CD4-positive, alpha-beta memory T cell (primary cell): ENCODE measurements at regions of chr12 and their contacts with region 1.

Region 1: DNA sequence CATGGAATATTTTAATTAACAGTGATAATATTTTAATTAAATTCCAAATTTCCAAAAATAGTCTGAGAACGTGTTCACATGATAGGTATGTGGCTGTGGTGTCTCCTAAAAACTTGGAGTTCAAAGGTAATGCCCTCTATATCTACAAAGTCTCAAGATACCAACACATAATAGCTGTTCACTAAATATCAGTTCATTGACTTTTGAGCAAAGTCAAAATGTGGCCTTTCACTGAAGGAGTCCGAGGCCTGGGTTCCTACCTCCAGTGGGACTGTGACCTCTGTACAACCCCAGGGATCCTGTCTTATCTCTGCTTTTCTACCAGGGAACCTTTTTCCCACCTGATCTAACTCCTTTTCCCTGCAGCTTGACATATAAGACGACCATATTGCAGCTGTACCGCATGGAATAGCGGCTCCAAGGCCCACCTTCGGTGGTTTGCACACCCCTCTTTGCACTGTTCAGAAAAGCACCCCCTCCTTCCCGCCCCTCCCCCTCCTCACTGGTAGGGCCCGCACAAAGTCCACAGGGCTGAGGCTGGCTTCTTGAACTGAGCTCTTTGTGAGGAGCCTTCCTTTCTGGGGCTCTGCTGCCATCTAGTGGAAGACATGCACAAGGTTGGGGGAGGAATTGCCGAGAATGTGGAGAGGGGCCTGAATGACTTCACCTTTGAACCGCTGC is 3.1 kb downstream of the CCND2 start:
- DNase-seq: peak; percentile 85 to 92 (median 88)
- H3K4me3 ChIP-seq: peak overlapping the region; percentile 84 to 96
- H3K4me3 Mint-ChIP-seq: peak overlapping the region; percentile 91 to 99 (median 96)
- H3K27ac ChIP-seq: peak overlapping the region; percentile 91
- H3K27ac Mint-ChIP-seq: peak overlapping the region; percentile 91 to 100 (median 98)
- H3K4me1 ChIP-seq: peaks cover 68% of the 10 kb centered on the region
- H3K4me1 Mint-ChIP-seq: peaks cover 34 to 88% (median 59%) of the 10 kb centered on the region in 4 donors
- H3K27me3 ChIP-seq: no peaks in the 10 kb centered on the region
- H3K27me3 Mint-ChIP-seq: no peaks in the 10 kb centered on the region

Region 2: DNA sequence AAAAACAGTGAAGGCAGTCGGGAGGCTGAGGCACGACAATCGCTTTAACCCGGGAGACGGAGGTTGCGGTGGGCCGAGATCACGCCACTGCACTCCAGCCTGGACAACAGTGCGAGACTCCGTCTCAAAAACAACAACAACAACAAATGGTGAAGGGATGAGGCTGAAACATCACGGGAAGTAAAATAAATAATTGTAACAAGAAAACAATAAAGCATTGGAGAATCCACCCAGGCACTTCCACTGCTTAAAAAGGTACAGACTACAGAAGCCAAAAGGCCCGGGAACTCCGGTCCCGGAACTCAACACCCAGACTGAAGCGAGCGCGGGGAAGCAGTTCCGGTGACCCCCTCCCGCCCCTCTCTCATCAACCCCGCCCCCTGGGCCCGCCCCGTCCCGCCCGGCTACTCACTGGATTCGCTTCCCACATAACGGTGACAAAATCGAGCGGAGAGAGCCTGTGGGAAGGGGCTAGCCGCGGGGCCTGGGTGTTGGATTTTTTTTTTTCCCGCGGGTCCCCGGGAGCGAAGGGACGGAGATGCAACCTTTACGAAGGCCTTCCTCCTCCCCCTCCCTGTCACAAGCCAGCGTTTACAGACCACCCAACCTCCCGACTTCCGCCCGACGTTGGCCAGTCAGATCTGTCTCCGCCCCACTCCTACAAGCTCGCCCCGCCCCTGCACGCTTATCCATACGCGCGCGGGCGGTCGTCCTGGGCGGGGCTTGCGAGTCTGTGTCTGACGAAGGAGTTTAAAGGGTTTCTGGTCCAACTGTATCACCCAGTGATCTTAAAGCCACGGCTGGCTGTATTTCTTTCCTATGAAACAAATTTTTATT is 403.6 kb before region 1 on chr12 and contains the start of gene PARP11:
- CTCF ChIA-PET with region 1: interaction called, 11 read pairs
- POLR2A ChIA-PET with region 1: interaction called, 12 read pairs
- intact Hi-C with region 1: no loop called
- DNase-seq: peak; percentile 97 to 98 (median 97)
- H3K4me3 ChIP-seq: peak within 1 kb of the TSS; percentile 53 to 87
- H3K4me3 Mint-ChIP-seq: peak within 1 kb of the TSS; percentile 95 to 99 (median 98)
- H3K27ac ChIP-seq: peak within 1 kb of the TSS; percentile 95
- H3K27ac Mint-ChIP-seq: peak within 1 kb of the TSS; percentile 95 to 100 (median 99)
- H3K4me1 ChIP-seq: peaks cover 50% of the 10 kb centered on the region
- H3K4me1 Mint-ChIP-seq: peaks cover 34 to 57% (median 40%) of the 10 kb centered on the region in 4 donors
- H3K27me3 ChIP-seq: no peaks in the 10 kb centered on the region
- H3K27me3 Mint-ChIP-seq: no peaks in the 10 kb centered on the region
- total RNA-seq, gene PARP11: 36.4 to 39.9 TPM

Region 3: DNA sequence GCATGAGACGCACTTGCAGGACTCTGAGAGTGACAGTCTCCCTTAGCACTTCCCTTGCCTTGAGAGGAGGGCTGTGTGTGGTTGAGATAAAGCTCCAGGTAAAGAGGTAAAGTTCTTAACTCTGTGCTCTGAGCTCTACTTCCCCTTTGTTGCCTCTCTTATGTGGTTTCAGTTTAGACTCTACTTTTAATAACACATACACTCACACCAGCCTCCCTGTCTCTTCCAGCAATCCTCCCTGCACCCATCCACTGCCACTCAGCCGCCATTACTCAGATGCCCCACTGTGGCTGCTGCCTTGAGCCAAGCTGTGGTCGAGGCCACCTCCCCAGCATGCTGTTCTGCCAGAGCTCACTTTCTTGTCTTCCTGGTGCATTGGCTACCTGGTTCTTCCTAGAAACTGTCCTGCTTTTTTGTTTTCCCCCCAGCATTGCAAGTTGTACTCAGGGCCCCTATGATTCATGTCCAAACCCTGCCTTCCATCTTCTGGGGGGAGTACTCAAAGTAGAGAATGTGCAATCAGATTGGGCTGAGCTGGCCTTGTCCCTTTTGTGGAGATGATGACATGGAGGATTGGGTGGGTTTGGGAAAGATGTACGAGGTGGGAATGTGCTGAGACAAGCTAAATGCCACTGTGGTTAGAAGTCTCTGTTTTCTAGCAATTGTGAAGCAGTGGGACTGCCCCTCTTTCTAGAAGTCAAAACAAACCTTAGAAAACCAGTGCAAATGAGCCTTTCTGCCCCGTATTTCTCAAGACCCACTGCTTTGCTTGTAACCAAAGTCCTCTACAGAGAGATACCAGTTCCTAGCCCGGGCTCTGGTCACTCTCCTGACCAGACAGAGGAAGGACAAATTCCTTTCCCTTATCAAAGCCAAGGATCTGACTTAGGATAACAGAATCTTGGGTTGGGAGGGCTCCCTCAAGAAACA is 287.9 kb before region 1 on chr12:
- CTCF ChIA-PET with region 1: interaction called, 217 read pairs
- POLR2A ChIA-PET with region 1: interaction called, 62 read pairs
- intact Hi-C with region 1: no loop called
- DNase-seq: peak in 4 of 5 donors; percentile 40 to 50 (median 43)
- H3K4me3 ChIP-seq: peak overlapping the region in 1 of 2 donors; percentile 2
- H3K4me3 Mint-ChIP-seq: peak overlapping the region in 7 of 8 donors; percentile 45 to 88 (median 66)
- H3K27ac ChIP-seq: peak overlapping the region; percentile 6
- H3K27ac Mint-ChIP-seq: peak overlapping the region; percentile 56 to 94 (median 90)
- H3K4me1 ChIP-seq: peaks cover 24% of the 10 kb centered on the region
- H3K4me1 Mint-ChIP-seq: peaks cover 18 to 33% (median 25%) of the 10 kb centered on the region in 4 donors
- H3K27me3 ChIP-seq: no peaks in the 10 kb centered on the region
- H3K27me3 Mint-ChIP-seq: peaks cover 0 to 2% of the 10 kb centered on the region in 2 donors

Region 4: GRCh38 chr12:4107436-4107878 is 169.2 kb before region 1 on chr12:
- CTCF ChIA-PET with region 1: interaction called, 128 read pairs
- POLR2A ChIA-PET with region 1: interaction called, 51 read pairs
- intact Hi-C with region 1: loop called (anchors 1 kb)
- DNase-seq: peak; percentile 78 to 87 (median 83)
- H3K4me3 ChIP-seq: no peak overlapping the region
- H3K4me3 Mint-ChIP-seq: peak overlapping the region in 7 of 8 donors; percentile 26 to 67 (median 47)
- H3K27ac ChIP-seq: no peak overlapping the region
- H3K27ac Mint-ChIP-seq: peak overlapping the region in 6 of 7 donors; percentile 80 to 94 (median 92)
- H3K4me1 ChIP-seq: peaks cover 10% of the 10 kb centered on the region
- H3K4me1 Mint-ChIP-seq: peaks cover 8 to 15% (median 11%) of the 10 kb centered on the region in 4 donors
- H3K27me3 ChIP-seq: no peaks in the 10 kb centered on the region
- H3K27me3 Mint-ChIP-seq: peaks cover 0 to 2% of the 10 kb centered on the region in 2 donors

Region 5: DNA sequence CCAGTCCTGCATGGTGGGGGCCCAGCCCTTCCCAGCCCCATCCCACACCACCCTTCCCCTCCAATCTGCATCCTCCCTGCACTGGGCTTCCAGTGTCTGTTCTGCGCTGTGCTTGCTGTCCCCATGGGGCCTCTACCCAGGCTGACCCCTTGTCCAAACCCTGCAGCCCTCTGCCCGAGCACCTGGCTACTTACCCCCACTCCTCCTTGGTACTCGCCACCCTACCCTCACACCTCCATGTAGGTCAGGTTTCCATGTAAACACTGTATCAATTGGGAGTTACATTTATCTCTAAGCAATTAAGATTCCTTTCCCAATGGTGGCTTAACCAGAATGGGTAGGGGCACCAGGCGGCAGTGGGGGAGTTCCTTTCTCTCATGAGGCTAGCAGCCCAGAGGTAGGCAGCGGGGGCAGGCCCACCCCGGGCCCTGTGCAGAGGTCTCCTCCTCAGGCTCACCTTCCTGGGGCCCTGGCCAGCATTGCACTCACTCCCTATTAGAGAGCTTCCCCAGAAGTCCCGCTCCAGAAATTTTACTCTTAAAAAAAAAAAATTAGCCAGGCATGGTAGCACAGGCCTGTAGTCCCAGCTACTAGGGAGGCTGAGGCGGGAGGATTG is 79.8 kb before region 1 on chr12:
- CTCF ChIA-PET with region 1: interaction called, 10 read pairs
- POLR2A ChIA-PET with region 1: no interaction called
- intact Hi-C with region 1: no loop called
- DNase-seq: no peak
- H3K4me3 ChIP-seq: no peak overlapping the region
- H3K4me3 Mint-ChIP-seq: no peak overlapping the region
- H3K27ac ChIP-seq: no peak overlapping the region
- H3K27ac Mint-ChIP-seq: no peak overlapping the region
- H3K4me1 ChIP-seq: no peaks in the 10 kb centered on the region
- H3K4me1 Mint-ChIP-seq: no peaks in the 10 kb centered on the region
- H3K27me3 ChIP-seq: no peaks in the 10 kb centered on the region
- H3K27me3 Mint-ChIP-seq: no peaks in the 10 kb centered on the region

Region 6: GRCh38 chr12:4293299-4293965 is 16.8 kb after region 1 on chr12:
- CTCF ChIA-PET with region 1: interaction called, 76 read pairs
- POLR2A ChIA-PET with region 1: interaction called, 26 read pairs
- intact Hi-C with region 1: no loop called
- DNase-seq: peak in 3 of 5 donors; percentile 18 to 20 (median 18)
- H3K4me3 ChIP-seq: peak overlapping the region in 1 of 2 donors; percentile 12
- H3K4me3 Mint-ChIP-seq: peak overlapping the region in 7 of 8 donors; percentile 43 to 84 (median 80)
- H3K27ac ChIP-seq: peak overlapping the region; percentile 56
- H3K27ac Mint-ChIP-seq: peak overlapping the region; percentile 89 to 99 (median 96)
- H3K4me1 ChIP-seq: peaks cover 56% of the 10 kb centered on the region
- H3K4me1 Mint-ChIP-seq: peaks cover 47 to 81% (median 70%) of the 10 kb centered on the region in 4 donors
- H3K27me3 ChIP-seq: no peaks in the 10 kb centered on the region
- H3K27me3 Mint-ChIP-seq: no peaks in the 10 kb centered on the region

Region 7: GRCh38 chr12:4392223-4392742 is 115.6 kb after region 1 on chr12:
- CTCF ChIA-PET with region 1: no interaction called
- POLR2A ChIA-PET with region 1: no interaction called
- intact Hi-C with region 1: no loop called
- DNase-seq: no peak
- H3K4me3 ChIP-seq: no peak overlapping the region
- H3K4me3 Mint-ChIP-seq: no peak overlapping the region
- H3K27ac ChIP-seq: no peak overlapping the region
- H3K27ac Mint-ChIP-seq: peak overlapping the region in 1 of 7 donors; percentile 28
- H3K4me1 ChIP-seq: no peaks in the 10 kb centered on the region
- H3K4me1 Mint-ChIP-seq: peaks cover 0 to 1% (median 0%) of the 10 kb centered on the region in 4 donors
- H3K27me3 ChIP-seq: no peaks in the 10 kb centered on the region
- H3K27me3 Mint-ChIP-seq: peaks cover 29 to 39% of the 10 kb centered on the region in 2 donors